ENCODE measurements at regions of chr10 and their contacts with region 1.

Region 1: DNA sequence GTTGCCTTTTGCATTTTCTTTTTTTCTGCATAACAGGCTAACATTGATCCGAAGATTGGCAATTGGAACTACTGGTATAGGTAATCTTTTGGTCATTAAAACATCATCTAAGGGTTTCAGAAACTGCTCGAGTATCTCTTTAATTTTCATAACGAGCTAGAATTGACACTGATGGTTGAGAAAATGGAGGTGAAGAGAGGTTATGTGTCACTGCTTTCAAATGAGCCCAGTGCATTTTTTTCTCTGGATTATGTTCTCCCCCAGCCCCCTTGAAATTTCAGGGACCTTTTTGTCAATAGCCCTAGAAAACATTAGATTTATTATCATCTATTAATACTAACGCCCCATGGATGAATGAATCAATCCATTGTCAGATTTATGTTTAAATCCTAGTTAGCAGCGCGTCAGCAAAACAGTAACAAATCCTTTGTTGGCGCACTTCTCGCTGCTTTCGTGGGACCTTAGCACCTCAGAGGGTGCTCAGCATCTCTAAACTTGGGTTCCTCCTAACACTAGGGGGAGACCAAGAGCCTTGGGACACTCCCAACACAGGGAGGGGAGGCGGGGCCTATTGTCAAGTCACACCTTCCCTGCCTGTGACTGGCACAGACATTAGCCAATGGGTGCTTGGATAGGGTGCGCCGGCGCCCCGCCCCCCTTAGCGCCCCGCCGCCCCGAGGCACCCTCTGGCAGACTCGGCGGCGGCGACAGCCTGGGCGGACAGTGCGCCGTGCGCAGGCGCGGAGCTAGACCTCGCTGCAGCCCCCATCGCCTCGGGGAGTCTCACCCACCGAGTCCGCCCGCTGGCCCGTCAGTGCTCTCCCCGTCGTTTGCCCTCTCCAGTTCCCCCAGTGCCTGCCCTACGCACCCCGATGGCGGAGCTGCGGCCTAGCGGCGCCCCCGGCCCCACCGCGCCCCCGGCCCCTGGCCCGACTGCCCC is at the start of gene SUFU:
- DNase-seq: peak; percentile 98 to 99 (median 98)
- H3K4me3 ChIP-seq: peak within 1 kb of the TSS; percentile 97 to 99
- H3K4me3 Mint-ChIP-seq: peak within 1 kb of the TSS in 2 of 8 donors; percentile 92 to 95
- H3K27ac ChIP-seq: peak within 1 kb of the TSS; percentile 91
- H3K27ac Mint-ChIP-seq: peak within 1 kb of the TSS in 6 of 7 donors; percentile 86 to 95 (median 94)
- H3K4me1 ChIP-seq: peaks cover 54% of the 10 kb centered on the region
- H3K4me1 Mint-ChIP-seq: peaks cover 21 to 49% (median 35%) of the 10 kb centered on the region in 4 donors
- H3K27me3 ChIP-seq: no peaks in the 10 kb centered on the region
- H3K27me3 Mint-ChIP-seq: no peaks in the 10 kb centered on the region
- total RNA-seq, gene SUFU: 20.5 to 22.0 TPM

Region 2: DNA sequence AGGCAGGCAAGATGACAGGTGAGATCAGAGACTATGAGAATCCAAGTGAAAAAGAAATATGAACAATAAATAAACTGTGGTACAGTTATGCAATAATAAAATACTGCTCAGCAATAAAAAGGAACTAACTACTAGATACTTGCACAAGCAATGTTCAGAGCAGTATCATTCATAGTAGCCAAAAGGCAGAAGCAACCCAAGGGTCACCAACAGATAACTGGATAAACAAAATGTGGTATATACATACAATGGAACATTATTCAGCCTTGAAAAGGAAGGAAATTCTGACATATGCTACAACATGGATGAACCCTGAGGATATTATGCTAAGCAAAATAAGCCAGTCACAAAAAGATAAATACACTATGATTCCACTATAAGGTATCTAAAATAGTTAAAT is 583.0 kb before region 1 on chr10:
- CTCF ChIA-PET with region 1: no interaction called
- POLR2A ChIA-PET with region 1: no interaction called
- intact Hi-C with region 1: no loop called
- DNase-seq: no peak
- H3K4me3 ChIP-seq: no peak overlapping the region
- H3K4me3 Mint-ChIP-seq: no peak overlapping the region
- H3K27ac ChIP-seq: no peak overlapping the region
- H3K27ac Mint-ChIP-seq: no peak overlapping the region
- H3K4me1 ChIP-seq: no peaks in the 10 kb centered on the region
- H3K4me1 Mint-ChIP-seq: peaks cover 0 to 7% (median 4%) of the 10 kb centered on the region in 4 donors
- H3K27me3 ChIP-seq: no peaks in the 10 kb centered on the region
- H3K27me3 Mint-ChIP-seq: no peaks in the 10 kb centered on the region

Region 3: DNA sequence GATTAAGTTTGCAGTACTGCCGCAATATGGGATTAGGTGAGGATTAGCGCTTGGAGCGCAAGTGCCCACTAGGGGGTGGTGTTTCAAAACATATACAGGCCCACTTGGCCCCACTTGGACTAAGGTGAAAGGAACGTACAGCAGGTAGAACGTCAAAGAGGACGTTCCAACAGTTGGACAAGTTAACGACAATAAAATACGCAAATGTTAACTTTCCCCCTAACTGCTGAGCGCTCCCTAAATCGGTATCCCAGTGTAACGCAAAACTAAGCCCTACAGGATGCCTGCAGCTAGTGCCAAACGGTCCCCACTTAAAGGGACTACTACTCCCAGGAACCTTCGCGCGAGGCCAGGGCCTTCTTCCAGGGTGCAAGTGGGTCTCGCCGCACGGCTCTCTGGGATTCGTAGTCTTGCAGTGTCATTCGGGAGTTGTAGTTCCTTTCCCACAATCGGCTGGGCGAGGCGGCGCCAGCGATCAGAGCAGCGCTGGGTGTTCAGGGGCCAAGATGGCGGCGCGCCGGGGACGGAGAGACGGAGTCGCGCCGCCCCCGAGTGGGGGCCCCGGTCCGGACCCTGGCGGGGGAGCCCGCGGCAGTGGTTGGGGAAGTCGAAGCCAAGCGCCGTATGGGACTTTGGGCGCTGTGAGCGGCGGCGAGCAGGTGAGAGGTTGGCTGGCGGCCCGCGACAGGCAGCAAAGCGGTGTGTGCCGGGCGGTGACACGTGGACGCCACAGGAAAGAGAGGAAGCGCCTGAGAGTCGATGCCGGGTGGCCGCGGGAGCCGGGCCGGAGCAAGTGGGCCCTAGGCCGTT is 370.8 kb before region 1 on chr10 and contains the start of gene PPRC1:
- CTCF ChIA-PET with region 1: interaction called, 5 read pairs
- POLR2A ChIA-PET with region 1: interaction called, 3 read pairs
- intact Hi-C with region 1: loop called (anchors 1 kb)
- DNase-seq: peak; percentile 97 to 99 (median 97)
- H3K4me3 ChIP-seq: peak within 1 kb of the TSS; percentile 55 to 61
- H3K4me3 Mint-ChIP-seq: peak within 1 kb of the TSS; percentile 92 to 99 (median 96)
- H3K27ac ChIP-seq: peak within 1 kb of the TSS; percentile 88
- H3K27ac Mint-ChIP-seq: peak within 1 kb of the TSS; percentile 93 to 99 (median 96)
- H3K4me1 ChIP-seq: peaks cover 38% of the 10 kb centered on the region
- H3K4me1 Mint-ChIP-seq: peaks cover 27 to 50% (median 38%) of the 10 kb centered on the region in 4 donors
- H3K27me3 ChIP-seq: no peaks in the 10 kb centered on the region
- H3K27me3 Mint-ChIP-seq: no peaks in the 10 kb centered on the region
- total RNA-seq, gene PPRC1: 38.9 to 39.8 TPM

Region 4: DNA sequence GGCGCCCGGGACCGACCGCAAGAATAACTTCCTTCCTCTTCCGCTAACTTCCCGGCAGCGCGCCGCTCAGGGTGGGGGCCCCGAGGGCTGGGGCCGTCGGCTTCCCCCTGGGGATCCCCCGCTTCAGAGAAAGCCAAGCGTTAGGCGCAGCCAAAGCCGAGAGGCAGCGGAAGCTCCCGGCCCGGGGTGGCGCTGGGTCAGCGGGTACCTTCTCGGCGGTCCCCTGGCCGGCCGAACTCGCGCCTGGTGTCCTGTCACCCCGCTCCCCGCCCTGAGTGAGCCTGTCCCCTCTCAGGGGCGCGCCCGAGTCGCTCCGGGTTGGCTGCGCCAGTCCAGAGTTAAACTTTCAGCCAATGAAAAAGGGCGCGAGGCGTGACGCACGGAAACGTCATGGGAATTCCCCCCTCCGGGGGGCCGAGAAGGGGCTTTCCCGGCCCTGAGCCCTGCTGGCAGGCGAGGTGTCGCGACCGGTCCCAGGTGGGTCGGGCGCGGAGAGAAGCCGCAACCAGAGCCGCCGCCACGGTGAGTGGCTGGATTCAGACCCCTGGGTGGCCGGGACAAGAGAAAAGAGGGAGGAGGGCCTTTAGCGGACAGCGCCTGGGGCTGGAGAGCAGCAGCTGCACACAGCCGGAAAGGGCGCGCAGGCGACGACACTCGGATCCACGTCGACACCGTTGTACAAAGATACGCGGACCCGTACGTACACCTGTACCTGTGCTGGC is 109.3 kb before region 1 on chr10:
- CTCF ChIA-PET with region 1: interaction called, 8 read pairs
- POLR2A ChIA-PET with region 1: interaction called, 28 read pairs
- intact Hi-C with region 1: loop called (anchors 1 kb)
- DNase-seq: peak; percentile 99 to 100 (median 99)
- H3K4me3 ChIP-seq: peak overlapping the region; percentile 97 to 98
- H3K4me3 Mint-ChIP-seq: peak overlapping the region; percentile 94 to 98 (median 96)
- H3K27ac ChIP-seq: peak overlapping the region; percentile 100
- H3K27ac Mint-ChIP-seq: peak overlapping the region; percentile 98 to 100 (median 100)
- H3K4me1 ChIP-seq: peaks cover 43% of the 10 kb centered on the region
- H3K4me1 Mint-ChIP-seq: peaks cover 18 to 62% (median 34%) of the 10 kb centered on the region in 4 donors
- H3K27me3 ChIP-seq: no peaks in the 10 kb centered on the region
- H3K27me3 Mint-ChIP-seq: no peaks in the 10 kb centered on the region

Region 5: GRCh38 chr10:102461187-102462054 is 42.1 kb before region 1 on chr10:
- CTCF ChIA-PET with region 1: no interaction called
- POLR2A ChIA-PET with region 1: interaction called, 12 read pairs
- intact Hi-C with region 1: loop called (anchors 1 kb)
- DNase-seq: peak; percentile 90 to 91 (median 91)
- H3K4me3 ChIP-seq: peak overlapping the region; percentile 52 to 85
- H3K4me3 Mint-ChIP-seq: peak overlapping the region; percentile 83 to 95 (median 90)
- H3K27ac ChIP-seq: peak overlapping the region; percentile 70
- H3K27ac Mint-ChIP-seq: peak overlapping the region; percentile 75 to 95 (median 87)
- H3K4me1 ChIP-seq: peaks cover 16% of the 10 kb centered on the region
- H3K4me1 Mint-ChIP-seq: peaks cover 16 to 38% (median 23%) of the 10 kb centered on the region in 4 donors
- H3K27me3 ChIP-seq: no peaks in the 10 kb centered on the region
- H3K27me3 Mint-ChIP-seq: no peaks in the 10 kb centered on the region

Region 6: GRCh38 chr10:102678842-102679289 is 175.3 kb after region 1 on chr10:
- CTCF ChIA-PET with region 1: interaction called, 3 read pairs
- POLR2A ChIA-PET with region 1: interaction called, 4 read pairs
- intact Hi-C with region 1: loop called (anchors 1 kb)
- DNase-seq: no peak
- H3K4me3 ChIP-seq: no peak overlapping the region
- H3K4me3 Mint-ChIP-seq: no peak overlapping the region
- H3K27ac ChIP-seq: no peak overlapping the region
- H3K27ac Mint-ChIP-seq: peak overlapping the region in 5 of 7 donors; percentile 25 to 83 (median 64)
- H3K4me1 ChIP-seq: peaks cover 41% of the 10 kb centered on the region
- H3K4me1 Mint-ChIP-seq: peaks cover 23 to 57% (median 46%) of the 10 kb centered on the region in 4 donors
- H3K27me3 ChIP-seq: no peaks in the 10 kb centered on the region
- H3K27me3 Mint-ChIP-seq: no peaks in the 10 kb centered on the region

Region 7: GRCh38 chr10:102917962-102918816 is 414.6 kb after region 1 on chr10 and contains the start of gene CNNM2:
- CTCF ChIA-PET with region 1: no interaction called
- POLR2A ChIA-PET with region 1: interaction called, 3 read pairs
- intact Hi-C with region 1: loop called (anchors 1 kb)
- DNase-seq: peak; percentile 100
- H3K4me3 ChIP-seq: peak within 1 kb of the TSS; percentile 84 to 91
- H3K4me3 Mint-ChIP-seq: peak within 1 kb of the TSS; percentile 94 to 96 (median 95)
- H3K27ac ChIP-seq: peak within 1 kb of the TSS; percentile 72
- H3K27ac Mint-ChIP-seq: peak within 1 kb of the TSS; percentile 92 to 98 (median 96)
- H3K4me1 ChIP-seq: peaks cover 53% of the 10 kb centered on the region
- H3K4me1 Mint-ChIP-seq: peaks cover 35 to 59% (median 51%) of the 10 kb centered on the region in 4 donors
- H3K27me3 ChIP-seq: no peaks in the 10 kb centered on the region
- H3K27me3 Mint-ChIP-seq: peaks cover 4 to 6% of the 10 kb centered on the region in 2 donors
- total RNA-seq, gene CNNM2: 11.9 to 14.4 TPM

Measured in CD4-positive, alpha-beta memory T cell (primary cell).